ENCODE measurements at regions of chr10 and their contacts with region 1.

Region 1: GRCh38 chr10:17607603-17608332 is 9.4 kb downstream of the HACD1 start:
- DNase-seq: no peak
- H3K4me3 ChIP-seq: no peak overlapping the region
- H3K27ac ChIP-seq: no peak overlapping the region
- H3K4me1 ChIP-seq: no peaks in the 10 kb centered on the region
- H3K27me3 ChIP-seq: no peaks in the 10 kb centered on the region
- CTCF ChIP-seq: peak; percentile 82

Region 2: GRCh38 chr10:17742918-17743317 is 135.2 kb after region 1 on chr10:
- intact Hi-C with region 1: loop called (anchors 2 kb)
- DNase-seq: peak; percentile 74
- H3K4me3 ChIP-seq: no peak overlapping the region
- H3K27ac ChIP-seq: no peak overlapping the region
- H3K4me1 ChIP-seq: no peaks in the 10 kb centered on the region
- H3K27me3 ChIP-seq: no peaks in the 10 kb centered on the region
- CTCF ChIP-seq: peak; percentile 85

Region 3: GRCh38 chr10:17801507-17801906 is 193.7 kb after region 1 on chr10:
- intact Hi-C with region 1: no loop called
- DNase-seq: peak; percentile 12
- H3K4me3 ChIP-seq: no peak overlapping the region
- H3K27ac ChIP-seq: no peak overlapping the region
- H3K4me1 ChIP-seq: no peaks in the 10 kb centered on the region
- H3K27me3 ChIP-seq: no peaks in the 10 kb centered on the region
- CTCF ChIP-seq: peak; percentile 12

Region 4: DNA sequence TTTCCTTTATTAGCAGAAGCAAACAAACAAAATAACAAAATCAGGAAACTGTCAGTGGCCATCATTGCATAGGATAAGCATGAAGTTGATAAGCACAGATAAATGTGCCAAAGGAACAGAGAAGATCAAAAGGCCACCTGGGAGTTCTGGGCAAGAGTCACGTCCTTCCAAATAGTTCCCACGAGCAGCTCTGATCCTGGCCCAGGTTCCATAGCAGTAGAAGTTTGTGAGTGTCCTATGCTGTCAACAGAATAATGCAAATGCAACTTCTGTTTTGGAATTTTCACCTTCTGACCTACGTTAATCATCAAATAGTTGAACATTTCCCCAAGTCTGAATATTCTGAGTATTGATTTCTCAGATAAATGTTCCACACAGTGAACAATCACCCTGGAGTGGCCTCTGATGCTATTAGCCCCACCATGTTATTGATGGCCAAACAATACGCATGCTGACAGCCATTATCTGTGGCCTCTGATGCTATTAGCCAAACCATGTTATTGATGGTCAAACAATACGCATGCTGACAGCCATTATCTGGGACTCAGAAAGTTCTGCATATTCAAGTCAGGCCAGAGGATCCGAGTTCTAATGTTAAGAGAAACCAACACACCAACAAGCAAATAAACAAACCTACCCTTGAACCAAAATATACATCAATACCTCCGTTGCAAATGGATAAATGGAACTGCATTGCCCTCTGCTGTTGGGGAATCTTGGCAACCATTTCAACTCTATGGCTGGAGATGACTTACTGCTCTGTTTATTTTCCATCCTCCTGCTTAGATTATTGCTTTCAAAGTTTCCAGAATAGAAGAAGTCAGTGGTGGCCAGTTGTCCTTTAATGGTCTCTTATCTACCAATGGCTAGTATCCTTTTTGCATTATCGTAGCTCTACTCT is 264.7 kb after region 1 on chr10:
- intact Hi-C with region 1: loop called (anchors 5 kb)
- DNase-seq: peak; percentile 22
- H3K4me3 ChIP-seq: no peak overlapping the region
- H3K27ac ChIP-seq: no peak overlapping the region
- H3K4me1 ChIP-seq: no peaks in the 10 kb centered on the region
- H3K27me3 ChIP-seq: no peaks in the 10 kb centered on the region
- CTCF ChIP-seq: peak; percentile 26

Region 5: DNA sequence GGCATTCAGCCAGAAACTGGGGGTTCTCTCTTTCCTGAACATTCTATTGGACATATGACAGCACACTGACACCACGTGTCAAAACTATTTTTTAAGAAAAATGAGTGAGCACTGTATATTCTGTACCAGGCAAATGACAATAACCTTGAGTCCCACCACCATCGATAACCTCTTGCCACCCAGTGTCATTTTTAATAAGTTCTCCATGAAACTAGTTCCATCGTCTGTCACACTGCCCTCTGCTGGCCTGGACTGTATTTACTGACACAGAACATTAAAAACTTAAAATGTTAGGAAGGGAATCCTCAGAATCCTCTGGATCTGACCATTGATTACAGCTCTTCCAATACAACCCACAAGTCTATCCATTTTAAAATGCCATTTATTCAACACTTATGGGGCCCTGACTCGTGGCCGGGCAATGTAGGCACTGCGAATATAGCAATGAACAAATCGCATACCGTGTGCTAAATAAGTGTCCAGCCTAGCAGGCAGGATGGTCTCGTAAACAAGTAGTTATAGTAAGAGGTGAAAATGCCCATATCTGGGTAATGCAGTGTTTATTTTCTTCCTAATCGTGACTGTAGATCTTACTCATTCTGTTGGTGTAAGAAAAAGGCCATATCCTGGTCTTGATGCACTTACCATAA is 496.6 kb after region 1 on chr10:
- intact Hi-C with region 1: loop called (anchors 10 kb)
- DNase-seq: peak; percentile 64
- H3K4me3 ChIP-seq: no peak overlapping the region
- H3K27ac ChIP-seq: no peak overlapping the region
- H3K4me1 ChIP-seq: no peaks in the 10 kb centered on the region
- H3K27me3 ChIP-seq: no peaks in the 10 kb centered on the region
- CTCF ChIP-seq: peak; percentile 63

Region 6: DNA sequence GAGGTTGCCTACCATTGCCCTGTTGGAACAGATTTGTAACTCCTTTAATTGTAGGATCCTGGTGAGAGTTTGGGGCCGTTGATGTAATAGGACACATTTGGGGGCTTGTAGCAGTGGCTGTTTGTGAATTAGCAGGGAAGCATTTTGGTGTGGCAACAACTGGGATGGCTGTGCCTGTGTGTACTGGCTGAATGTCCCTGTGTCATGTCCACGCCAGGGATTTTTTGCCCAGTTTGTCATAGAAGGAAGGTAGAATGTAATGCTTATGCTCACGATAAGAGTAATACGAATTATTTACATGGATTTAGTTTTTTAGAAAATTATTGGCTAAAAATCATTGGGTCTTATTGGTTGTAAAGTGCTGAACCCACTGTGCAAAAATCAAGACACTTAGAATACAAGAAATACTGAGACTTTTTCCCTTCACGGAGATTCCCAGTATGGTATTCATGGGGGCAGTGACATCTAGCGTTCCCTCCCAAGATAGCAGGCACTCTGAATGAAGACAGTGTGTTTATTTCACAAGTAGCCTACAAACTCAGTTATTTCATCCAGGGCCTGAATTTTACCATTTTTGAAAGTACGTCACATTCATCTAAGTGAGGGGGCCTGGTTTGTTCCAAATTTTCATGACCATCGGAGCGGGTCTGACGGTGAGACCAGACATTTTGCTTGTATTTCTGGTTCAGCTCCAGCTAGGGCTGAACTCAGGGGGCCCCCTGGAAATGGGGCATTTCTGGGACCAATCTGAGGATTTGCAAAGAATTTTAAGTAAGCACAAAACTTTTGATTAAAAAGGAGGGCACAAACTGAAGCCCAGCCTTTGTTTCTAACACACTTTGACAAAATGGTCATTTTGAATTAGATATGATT is 607.2 kb after region 1 on chr10:
- intact Hi-C with region 1: loop called (anchors 10 kb)
- DNase-seq: peak; percentile 60
- H3K4me3 ChIP-seq: no peak overlapping the region
- H3K27ac ChIP-seq: no peak overlapping the region
- H3K4me1 ChIP-seq: no peaks in the 10 kb centered on the region
- H3K27me3 ChIP-seq: no peaks in the 10 kb centered on the region
- CTCF ChIP-seq: peak; percentile 67

Measured in colonic mucosa (tissue), 4 donors.